CD8-positive, alpha-beta T cell (primary cell): ENCODE measurements at regions of chr11 and their contacts with region 1.

Region 1: GRCh38 chr11:66651016-66651415 is 12.5 kb downstream of the RBM4 start:
- DNase-seq: peak in 2 of 9 experiments; percentile 17 to 47
- ATAC-seq: no peak
- H3K4me3 ChIP-seq: no peak overlapping the region
- H3K4me3 Mint-ChIP-seq: no peak overlapping the region
- H3K27ac ChIP-seq: no peak overlapping the region
- H3K27ac Mint-ChIP-seq: no peak overlapping the region
- H3K4me1 ChIP-seq: peaks cover 30% of the 10 kb centered on the region
- H3K4me1 Mint-ChIP-seq: peaks cover 58% of the 10 kb centered on the region
- H3K27me3 ChIP-seq: no peaks in the 10 kb centered on the region
- H3K27me3 Mint-ChIP-seq: no peaks in the 10 kb centered on the region
- CTCF ChIP-seq: no peak

Region 2: GRCh38 chr11:66586136-66586535 is 64.9 kb before region 1 on chr11:
- CTCF ChIA-PET with region 1: no interaction called
- POLR2A ChIA-PET with region 1: no interaction called
- intact Hi-C with region 1: no loop called
- DNase-seq: no peak
- ATAC-seq: no peak
- H3K4me3 ChIP-seq: no peak overlapping the region
- H3K4me3 Mint-ChIP-seq: no peak overlapping the region
- H3K27ac ChIP-seq: no peak overlapping the region
- H3K27ac Mint-ChIP-seq: no peak overlapping the region
- H3K4me1 ChIP-seq: no peaks in the 10 kb centered on the region
- H3K4me1 Mint-ChIP-seq: no peaks in the 10 kb centered on the region
- H3K27me3 ChIP-seq: no peaks in the 10 kb centered on the region
- H3K27me3 Mint-ChIP-seq: no peaks in the 10 kb centered on the region
- CTCF ChIP-seq: no peak

Region 3: DNA sequence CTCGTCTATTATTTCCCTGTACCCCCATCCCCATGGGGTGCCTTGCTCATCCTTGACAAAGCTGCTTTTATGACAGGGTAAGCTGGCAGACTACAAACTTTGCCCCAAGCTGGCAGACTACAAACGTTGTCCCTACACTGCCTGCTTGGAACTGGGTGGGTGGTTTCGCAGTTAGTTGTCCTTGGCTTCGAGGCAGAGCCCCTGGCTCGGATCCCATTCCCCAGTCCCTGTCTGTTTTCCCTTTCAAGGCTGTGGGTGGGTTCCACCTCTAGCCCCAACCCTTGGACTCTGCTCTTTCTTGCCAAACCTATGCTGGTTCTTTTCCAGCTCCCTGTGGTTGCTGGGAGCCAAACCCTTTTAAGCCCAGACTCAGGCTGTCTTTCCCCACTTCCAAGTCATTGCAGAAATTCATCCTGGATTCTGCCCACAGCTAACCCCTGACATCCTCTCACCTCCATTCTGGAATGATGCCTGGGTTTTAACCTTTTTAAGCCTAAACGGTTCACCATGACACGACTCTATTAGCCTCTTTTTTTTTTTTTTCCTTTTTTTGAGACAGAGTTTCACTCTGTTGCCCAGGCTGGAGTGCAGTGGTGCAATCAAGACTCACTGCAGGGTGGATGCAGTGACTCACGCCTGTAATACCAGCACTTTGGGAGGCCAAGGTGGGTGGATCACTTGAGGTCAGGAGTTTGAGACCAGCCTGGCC is 43.7 kb before region 1 on chr11:
- CTCF ChIA-PET with region 1: no interaction called
- POLR2A ChIA-PET with region 1: no interaction called
- intact Hi-C with region 1: loop called in 1 of 2 experiments (anchors 1 kb)
- DNase-seq: no peak
- ATAC-seq: no peak
- H3K4me3 ChIP-seq: no peak overlapping the region
- H3K4me3 Mint-ChIP-seq: no peak overlapping the region
- H3K27ac ChIP-seq: no peak overlapping the region
- H3K27ac Mint-ChIP-seq: no peak overlapping the region
- H3K4me1 ChIP-seq: no peaks in the 10 kb centered on the region
- H3K4me1 Mint-ChIP-seq: peaks cover 9% of the 10 kb centered on the region
- H3K27me3 ChIP-seq: no peaks in the 10 kb centered on the region
- H3K27me3 Mint-ChIP-seq: no peaks in the 10 kb centered on the region
- CTCF ChIP-seq: no peak

Region 4: DNA sequence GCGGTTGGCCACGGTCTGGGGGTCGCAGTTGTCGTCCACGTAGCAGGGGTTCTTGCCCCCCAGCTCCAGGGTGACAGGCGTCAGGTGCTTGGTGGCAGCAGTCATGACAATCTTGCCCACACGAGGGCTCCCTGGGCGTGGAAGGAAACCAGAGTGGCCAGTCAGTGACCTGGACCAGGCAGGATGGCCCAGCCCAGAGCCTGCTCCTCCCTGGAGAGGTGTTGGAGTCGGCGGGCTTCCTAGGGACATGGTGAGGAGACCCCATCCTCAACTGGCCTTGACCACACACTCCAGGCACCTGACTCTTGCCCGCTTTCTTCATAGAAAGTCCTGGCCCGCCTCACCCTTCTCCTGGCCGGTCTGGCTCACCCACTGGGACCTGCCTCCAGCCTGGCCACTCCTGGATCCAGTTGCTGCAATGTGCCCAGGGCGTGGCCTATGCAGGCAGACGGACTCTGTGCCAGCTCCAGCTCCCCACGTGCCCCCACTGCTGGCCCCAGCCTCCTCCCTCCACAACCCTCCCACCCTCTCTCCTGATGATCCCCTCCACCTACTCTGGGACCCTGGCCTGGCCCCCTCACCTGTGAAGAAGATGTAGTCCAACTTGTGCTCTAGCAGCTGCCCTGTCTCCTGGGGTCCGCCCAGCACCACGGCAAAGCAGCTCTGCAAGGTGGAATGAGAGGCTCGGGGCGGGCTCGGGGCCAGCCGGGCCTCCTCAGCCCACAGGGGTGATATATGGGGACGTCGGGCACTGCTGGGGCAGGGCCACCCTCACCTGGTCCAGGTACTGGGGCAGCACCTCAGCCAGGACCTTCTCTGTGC is 1014.7 kb after region 1 on chr11:
- CTCF ChIA-PET with region 1: no interaction called
- POLR2A ChIA-PET with region 1: no interaction called
- intact Hi-C with region 1: no loop called
- DNase-seq: peak in 1 of 9 experiments; percentile 38
- ATAC-seq: no peak
- H3K4me3 ChIP-seq: no peak overlapping the region
- H3K4me3 Mint-ChIP-seq: no peak overlapping the region
- H3K27ac ChIP-seq: no peak overlapping the region
- H3K27ac Mint-ChIP-seq: no peak overlapping the region
- H3K4me1 ChIP-seq: no peaks in the 10 kb centered on the region
- H3K4me1 Mint-ChIP-seq: no peaks in the 10 kb centered on the region
- H3K27me3 ChIP-seq: peaks cover 0 to 10% of the 10 kb centered on the region in 2 experiments
- H3K27me3 Mint-ChIP-seq: no peaks in the 10 kb centered on the region
- CTCF ChIP-seq: no peak